ENCODE measurements at regions of chr16 and their contacts with region 1.

Region 1: DNA sequence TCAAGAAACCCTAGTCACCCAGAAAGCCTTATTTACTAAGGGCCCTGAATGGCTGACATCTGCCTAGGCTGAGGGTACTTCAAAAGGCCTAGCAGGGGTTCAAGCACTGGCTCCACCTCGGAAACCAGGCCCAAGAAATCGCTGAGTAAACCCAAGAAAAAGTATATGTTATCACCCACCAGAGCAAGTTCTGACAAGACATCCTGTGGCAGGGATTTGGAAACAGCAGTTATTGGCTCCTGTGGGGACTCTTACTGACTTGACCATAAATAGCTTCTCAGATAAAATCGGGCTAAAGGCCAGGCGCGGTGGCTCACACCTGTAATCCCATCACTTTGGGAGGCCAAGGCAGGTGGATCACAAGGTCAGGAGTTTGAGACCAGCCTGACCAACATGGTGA is 12.2 kb downstream of the ATP6V0D1 start:
- DNase-seq: no peak
- ATAC-seq: no peak
- H3K4me3 ChIP-seq: no peak overlapping the region
- H3K4me3 Mint-ChIP-seq: no peak overlapping the region
- H3K27ac ChIP-seq: no peak overlapping the region
- H3K27ac Mint-ChIP-seq: no peak overlapping the region
- H3K4me1 ChIP-seq: no peaks in the 10 kb centered on the region
- H3K4me1 Mint-ChIP-seq: peaks cover 53% of the 10 kb centered on the region
- H3K27me3 ChIP-seq: no peaks in the 10 kb centered on the region
- H3K27me3 Mint-ChIP-seq: no peaks in the 10 kb centered on the region
- CTCF ChIP-seq: no peak

Region 2: DNA sequence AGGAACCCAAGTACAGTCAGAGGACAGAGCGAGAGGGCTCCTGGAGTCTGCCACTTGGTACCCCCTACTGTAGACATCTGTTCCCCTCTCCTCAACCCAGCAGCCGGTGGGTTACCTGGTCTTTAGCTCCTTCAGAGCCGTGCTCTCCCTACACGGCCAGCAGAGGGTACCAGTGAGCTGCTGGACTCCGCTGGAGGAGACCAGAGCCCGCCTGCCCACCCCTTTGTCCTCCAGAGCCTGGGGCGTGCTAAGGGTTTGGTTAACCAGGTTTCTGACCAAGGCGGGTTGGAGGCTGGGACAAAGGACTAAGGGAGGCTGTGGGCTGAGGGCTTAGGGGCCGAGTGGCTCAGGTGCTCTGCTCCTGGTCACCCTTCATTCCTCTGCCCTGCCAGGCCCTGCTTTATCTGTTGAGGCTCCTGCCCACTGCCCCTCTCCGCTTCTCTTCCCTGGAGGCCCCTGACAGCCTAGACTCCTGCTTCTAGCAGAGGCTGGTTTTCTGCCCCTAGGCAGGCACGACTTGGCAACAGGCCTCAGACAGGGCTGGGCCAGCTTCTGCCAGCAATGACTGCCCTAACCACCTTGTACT is 40.5 kb before region 1 on chr16:
- CTCF ChIA-PET with region 1: interaction called, 4 read pairs
- POLR2A ChIA-PET with region 1: no interaction called
- intact Hi-C with region 1: loop called (anchors 5 kb)
- DNase-seq: peak in 8 of 9 experiments; percentile 25 to 64 (median 56)
- ATAC-seq: peak; percentile 71
- H3K4me3 ChIP-seq: no peak overlapping the region
- H3K4me3 Mint-ChIP-seq: no peak overlapping the region
- H3K27ac ChIP-seq: no peak overlapping the region
- H3K27ac Mint-ChIP-seq: no peak overlapping the region
- H3K4me1 ChIP-seq: peaks cover 7% of the 10 kb centered on the region
- H3K4me1 Mint-ChIP-seq: peaks cover 11% of the 10 kb centered on the region
- H3K27me3 ChIP-seq: peaks cover 12 to 19% of the 10 kb centered on the region in 2 experiments
- H3K27me3 Mint-ChIP-seq: peaks cover 51% of the 10 kb centered on the region
- CTCF ChIP-seq: peak; percentile 51